CD4-positive, alpha-beta T cell (primary cell): ENCODE measurements at regions of chr12 and their contacts with region 1.

Region 1: GRCh38 chr12:90575995-90576394 is 379.0 kb downstream of the CCER1 start:
- DNase-seq: no peak
- ATAC-seq: no peak
- H3K4me3 ChIP-seq: no peak overlapping the region
- H3K4me3 Mint-ChIP-seq: no peak overlapping the region
- H3K27ac ChIP-seq: no peak overlapping the region
- H3K27ac Mint-ChIP-seq: no peak overlapping the region
- H3K4me1 ChIP-seq: no peaks in the 10 kb centered on the region
- H3K4me1 Mint-ChIP-seq: no peaks in the 10 kb centered on the region
- H3K27me3 ChIP-seq: no peaks in the 10 kb centered on the region
- H3K27me3 Mint-ChIP-seq: peaks cover 4% of the 10 kb centered on the region
- CTCF ChIP-seq: no peak

Region 2: GRCh38 chr12:90611048-90611447 is 35.1 kb after region 1 on chr12:
- CTCF ChIA-PET with region 1: no interaction called
- POLR2A ChIA-PET with region 1: no interaction called
- intact Hi-C with region 1: no loop called
- DNase-seq: no peak
- ATAC-seq: no peak
- H3K4me3 ChIP-seq: no peak overlapping the region
- H3K4me3 Mint-ChIP-seq: no peak overlapping the region
- H3K27ac ChIP-seq: no peak overlapping the region
- H3K27ac Mint-ChIP-seq: no peak overlapping the region
- H3K4me1 ChIP-seq: no peaks in the 10 kb centered on the region
- H3K4me1 Mint-ChIP-seq: no peaks in the 10 kb centered on the region
- H3K27me3 ChIP-seq: no peaks in the 10 kb centered on the region
- H3K27me3 Mint-ChIP-seq: no peaks in the 10 kb centered on the region
- CTCF ChIP-seq: no peak

Region 3: DNA sequence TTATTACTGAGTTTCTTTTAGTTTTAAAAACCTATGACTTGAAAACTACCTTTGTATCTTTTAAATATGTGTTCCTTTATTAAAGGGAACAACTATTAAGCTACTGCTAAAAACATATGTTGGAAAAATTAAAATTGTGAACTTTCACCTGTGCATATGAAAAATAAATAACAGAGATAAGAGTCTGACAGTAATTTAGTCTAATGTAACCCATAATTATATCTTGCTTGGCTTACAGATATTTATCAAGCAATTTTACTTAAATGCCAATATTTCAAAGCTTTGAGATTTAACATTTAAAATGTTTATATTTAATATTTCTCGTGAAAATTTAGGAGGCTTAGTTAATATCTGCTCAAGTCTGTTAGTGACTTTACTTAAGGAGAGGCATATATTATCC is 69.2 kb after region 1 on chr12:
- CTCF ChIA-PET with region 1: no interaction called
- POLR2A ChIA-PET with region 1: no interaction called
- intact Hi-C with region 1: loop called in 1 of 2 experiments (anchors 2 kb)
- DNase-seq: no peak
- ATAC-seq: no peak
- H3K4me3 ChIP-seq: no peak overlapping the region
- H3K4me3 Mint-ChIP-seq: no peak overlapping the region
- H3K27ac ChIP-seq: no peak overlapping the region
- H3K27ac Mint-ChIP-seq: no peak overlapping the region
- H3K4me1 ChIP-seq: no peaks in the 10 kb centered on the region
- H3K4me1 Mint-ChIP-seq: no peaks in the 10 kb centered on the region
- H3K27me3 ChIP-seq: no peaks in the 10 kb centered on the region
- H3K27me3 Mint-ChIP-seq: no peaks in the 10 kb centered on the region
- CTCF ChIP-seq: no peak